ENCODE measurements at regions of chr4 and their contacts with region 1.

Region 1: DNA sequence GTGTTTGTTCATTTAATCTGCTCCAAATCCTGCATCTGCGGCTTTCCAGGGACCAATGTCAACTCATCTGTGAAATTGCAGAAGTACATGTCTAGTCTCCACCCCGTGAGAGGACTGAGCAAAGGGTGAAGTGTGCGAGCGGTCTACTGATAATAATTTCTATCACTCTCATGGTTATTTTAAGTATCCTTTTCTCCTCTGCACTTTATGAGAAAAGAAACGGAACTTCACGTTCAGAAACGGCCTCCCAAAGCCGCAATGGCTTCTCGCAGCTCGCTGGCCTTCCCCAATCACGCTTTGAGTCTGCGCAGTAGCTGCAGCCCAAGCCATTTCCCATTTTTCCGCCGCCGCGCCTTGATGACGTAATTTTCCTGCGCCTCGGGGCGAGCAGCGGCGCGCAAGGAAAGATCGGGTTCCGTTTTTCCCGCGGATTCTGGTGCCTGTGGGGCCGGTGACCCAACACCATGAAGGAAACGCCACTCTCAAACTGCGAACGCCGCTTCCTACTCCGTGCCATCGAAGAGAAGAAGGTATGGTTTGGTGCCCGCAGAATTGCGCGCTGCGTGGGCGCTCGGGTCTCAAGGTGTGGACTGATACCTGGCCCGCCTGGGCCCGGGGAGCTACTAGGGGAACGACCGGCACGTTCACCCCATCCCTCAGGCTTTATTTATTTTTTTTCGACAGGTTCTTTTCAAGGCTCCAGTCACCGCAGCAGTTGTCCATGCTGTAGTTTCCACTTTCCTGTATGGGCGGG is at the start of gene EXOSC9:
- DNase-seq: peak; percentile 92
- H3K4me3 Mint-ChIP-seq: peak within 1 kb of the TSS; percentile 90
- H3K27ac Mint-ChIP-seq: peak within 1 kb of the TSS; percentile 97
- H3K4me1 Mint-ChIP-seq: peaks cover 51% of the 10 kb centered on the region
- H3K27me3 Mint-ChIP-seq: no peaks in the 10 kb centered on the region
- total RNA-seq, gene EXOSC9: 71.9 and 74.0 TPM in 2 replicates

Region 2: GRCh38 chr4:120066517-120067340 is 1734.4 kb before region 1 on chr4 and contains the start of gene MAD2L1:
- intact Hi-C with region 1: loop called (anchors 1 kb)
- DNase-seq: peak; percentile 98
- H3K4me3 Mint-ChIP-seq: peak within 1 kb of the TSS; percentile 99
- H3K27ac Mint-ChIP-seq: peak within 1 kb of the TSS; percentile 100
- H3K4me1 Mint-ChIP-seq: peaks cover 83% of the 10 kb centered on the region
- H3K27me3 Mint-ChIP-seq: peaks cover 4% of the 10 kb centered on the region
- total RNA-seq, gene MAD2L1: 63.3 and 69.0 TPM in 2 replicates

Region 3: GRCh38 chr4:121823505-121824170 is 22.5 kb after region 1 on chr4 and contains the start of gene CCNA2:
- intact Hi-C with region 1: loop called (anchors 1 kb)
- DNase-seq: peak; percentile 95
- H3K4me3 Mint-ChIP-seq: peak within 1 kb of the TSS; percentile 94
- H3K27ac Mint-ChIP-seq: peak within 1 kb of the TSS; percentile 91
- H3K4me1 Mint-ChIP-seq: peaks cover 45% of the 10 kb centered on the region
- H3K27me3 Mint-ChIP-seq: no peaks in the 10 kb centered on the region
- total RNA-seq, gene CCNA2: 59.9 and 64.3 TPM in 2 replicates

Region 4: DNA sequence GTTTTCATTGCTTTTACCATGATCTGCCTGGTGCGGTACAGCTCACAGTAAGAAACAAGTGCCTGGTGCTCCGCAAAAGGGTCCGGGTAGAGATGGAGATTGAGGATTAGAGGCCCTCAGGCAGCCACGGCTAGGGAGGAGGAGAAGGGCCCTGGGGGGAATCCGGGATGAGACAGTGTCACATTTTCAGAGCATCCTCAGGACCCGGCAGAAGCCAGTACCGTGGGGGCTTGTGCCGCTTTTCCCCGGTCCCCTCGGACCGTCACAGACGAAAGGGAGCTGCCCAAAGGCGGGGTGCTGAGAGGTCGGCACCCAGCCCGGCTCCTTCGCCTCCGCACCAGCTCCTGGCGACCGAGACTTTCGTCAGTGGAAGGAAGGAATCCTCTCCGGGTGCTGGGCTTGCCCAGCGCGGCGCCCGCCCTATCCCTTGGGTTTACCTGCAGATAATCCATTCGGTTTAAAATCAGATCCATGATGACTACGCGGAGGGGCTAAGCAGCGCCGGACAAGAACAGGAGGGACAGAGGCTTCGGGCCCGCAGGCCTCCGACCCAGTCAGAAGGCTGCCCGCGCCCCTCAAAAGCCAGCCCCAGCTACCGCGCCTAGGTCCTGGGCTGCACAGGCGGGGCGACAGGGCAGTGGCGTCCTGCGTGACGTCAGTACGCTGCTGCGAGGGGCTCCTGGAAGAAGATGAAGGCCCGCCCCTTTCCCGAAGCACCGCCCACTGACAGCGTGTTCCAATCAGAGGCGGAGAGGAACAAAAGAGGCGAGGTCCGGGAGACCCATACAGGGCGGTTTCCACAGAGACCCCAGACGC is 68.9 kb after region 1 on chr4 and contains the start of gene BBS7:
- intact Hi-C with region 1: loop called (anchors 1 kb)
- DNase-seq: peak; percentile 94
- H3K4me3 Mint-ChIP-seq: peak within 1 kb of the TSS; percentile 99
- H3K27ac Mint-ChIP-seq: peak within 1 kb of the TSS; percentile 91
- H3K4me1 Mint-ChIP-seq: peaks cover 23% of the 10 kb centered on the region
- H3K27me3 Mint-ChIP-seq: peaks cover 22% of the 10 kb centered on the region
- total RNA-seq, gene BBS7: 16.9 and 20.2 TPM in 2 replicates

Measured in activated T-helper 1 cell treated with anti-CD3 and anti-CD28 coated beads, Interleukin-12 subunit alpha, Interleukin-12 subunit beta, Interleukin-2, Interleukin-4 antibody, amounts not matched to agents 30 ng/mL and 10 ng/mL and 1 ng/mL, durations not matched to agents 14 hours and 24 hours and 36 hours (primary cell).